Activated CD4-positive, alpha-beta memory T cell treated with anti-CD3 and anti-CD28 coated beads for 36 hours (primary cell): ENCODE measurements at regions of chr1 and their contacts with region 1.

Region 1: GRCh38 chr1:84959294-84959693 is 37.6 kb downstream of the MCOLN2 start:
- DNase-seq: peak; percentile 81
- H3K4me3 Mint-ChIP-seq: no peak overlapping the region
- H3K27ac Mint-ChIP-seq: peak overlapping the region; percentile 72
- H3K4me1 Mint-ChIP-seq: peaks cover 32% of the 10 kb centered on the region
- H3K27me3 Mint-ChIP-seq: no peaks in the 10 kb centered on the region

Region 2: DNA sequence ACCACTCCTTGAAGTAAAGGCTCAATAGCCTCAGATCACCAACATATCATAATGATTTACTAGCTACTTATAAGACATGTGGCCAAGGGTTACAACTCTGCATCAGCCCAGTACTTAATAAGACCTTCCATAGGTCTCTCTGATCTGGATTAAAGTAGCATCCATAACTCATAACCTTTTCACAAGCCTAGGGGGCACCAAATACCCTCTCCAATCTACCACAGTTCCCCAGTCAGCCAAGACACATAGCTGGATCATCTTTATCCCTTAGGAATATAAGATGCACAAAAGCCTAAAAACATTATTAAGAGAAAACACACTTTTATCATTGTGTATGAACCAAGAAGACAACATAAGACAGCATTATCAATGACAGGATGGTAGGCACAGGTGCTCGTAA is 291.1 kb before region 1 on chr1:
- CTCF ChIA-PET with region 1: no interaction called
- POLR2A ChIA-PET with region 1: no interaction called
- intact Hi-C with region 1: no loop called
- DNase-seq: no peak
- H3K4me3 Mint-ChIP-seq: no peak overlapping the region
- H3K27ac Mint-ChIP-seq: no peak overlapping the region
- H3K4me1 Mint-ChIP-seq: peaks cover 2% of the 10 kb centered on the region
- H3K27me3 Mint-ChIP-seq: no peaks in the 10 kb centered on the region

Region 3: DNA sequence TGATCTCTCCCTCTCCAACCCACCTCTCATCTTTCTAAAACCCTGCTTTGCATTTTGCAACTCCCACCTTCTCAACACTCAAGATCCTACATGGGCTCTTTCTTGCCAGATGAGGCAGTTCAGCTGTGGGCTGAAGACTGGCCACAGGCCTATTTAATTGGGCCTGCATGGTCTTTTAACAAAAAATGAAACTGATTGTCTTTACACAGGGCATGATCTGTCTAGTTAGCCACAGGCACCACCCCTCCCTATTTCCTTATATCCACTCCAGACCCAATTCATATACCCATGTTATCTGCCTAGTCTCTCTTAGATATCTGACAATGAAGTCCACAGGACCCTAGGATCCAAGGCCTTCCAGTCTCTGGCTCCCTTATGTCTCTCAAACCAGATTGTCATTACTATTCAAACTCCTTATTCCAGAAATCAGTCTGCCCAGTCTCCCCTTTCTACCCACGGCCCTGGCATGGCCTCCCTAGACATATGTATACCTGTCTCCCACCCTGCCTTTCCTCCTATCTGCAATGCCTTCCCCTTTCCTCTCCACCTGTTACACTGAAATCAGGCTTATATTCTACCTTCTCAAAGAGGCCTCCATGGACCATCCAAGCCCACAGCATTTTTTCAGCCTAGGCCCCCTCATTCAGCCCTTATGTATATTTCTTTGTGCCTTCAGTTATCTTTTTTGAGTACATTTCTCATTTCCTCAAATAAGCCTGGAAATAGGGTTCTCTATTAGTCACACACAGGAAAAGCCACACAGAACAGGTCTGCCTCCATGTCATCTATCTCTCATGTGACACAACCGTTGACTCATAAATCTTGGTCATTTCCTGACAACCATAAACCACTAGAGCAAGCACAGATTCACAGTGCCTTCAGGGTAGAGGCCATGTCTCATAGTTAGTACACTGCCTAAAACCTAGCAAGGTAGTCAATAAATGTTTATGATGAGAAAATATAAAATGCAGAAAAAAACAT is 105.3 kb before region 1 on chr1:
- CTCF ChIA-PET with region 1: no interaction called
- POLR2A ChIA-PET with region 1: no interaction called
- intact Hi-C with region 1: no loop called
- DNase-seq: peak; percentile 54
- H3K4me3 Mint-ChIP-seq: peak overlapping the region; percentile 4
- H3K27ac Mint-ChIP-seq: peak overlapping the region; percentile 32
- H3K4me1 Mint-ChIP-seq: peaks cover 29% of the 10 kb centered on the region
- H3K27me3 Mint-ChIP-seq: no peaks in the 10 kb centered on the region

Region 4: DNA sequence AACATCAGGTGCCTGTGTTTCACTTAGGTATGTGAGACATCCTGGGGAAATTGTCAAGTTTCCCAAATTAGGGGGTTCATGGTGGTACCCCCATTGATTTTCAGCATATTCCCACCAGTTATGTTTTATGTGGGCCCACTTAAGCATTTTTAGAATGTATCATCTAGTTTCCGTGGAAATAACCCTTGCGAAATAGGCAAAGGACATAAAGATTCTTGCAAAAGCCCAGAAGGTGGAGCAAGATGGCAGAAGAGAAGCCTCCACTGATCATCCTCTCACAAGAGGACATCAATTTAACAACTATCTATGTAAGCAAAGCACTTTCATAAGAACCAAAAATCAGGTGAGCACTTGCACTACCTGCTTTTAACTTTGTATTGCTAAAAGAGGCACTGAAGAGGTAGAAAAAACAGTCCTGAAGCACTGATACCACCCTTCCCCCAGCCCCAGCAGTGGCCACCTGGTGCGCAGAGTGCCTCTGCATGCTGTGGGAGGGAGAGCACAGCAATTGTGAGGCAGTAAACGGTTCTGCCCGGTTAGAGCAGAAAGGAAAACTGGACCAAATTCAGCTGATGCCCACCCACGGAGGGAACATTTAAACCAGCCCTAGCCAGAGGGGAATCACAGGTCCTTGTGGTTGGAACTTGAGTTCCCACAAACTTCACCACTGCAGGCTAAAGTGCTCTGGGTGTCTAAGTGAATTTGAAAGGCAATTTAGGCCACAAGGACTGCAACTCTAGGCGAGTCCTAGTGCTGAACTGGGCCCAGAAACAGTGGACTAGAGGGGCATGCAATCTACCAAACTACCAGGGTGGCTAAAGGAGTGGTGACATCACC is 14.4 kb after region 1 on chr1:
- CTCF ChIA-PET with region 1: interaction called, 34 read pairs
- POLR2A ChIA-PET with region 1: interaction called, 36 read pairs
- intact Hi-C with region 1: loop called (anchors 1 kb)
- DNase-seq: peak; percentile 37
- H3K4me3 Mint-ChIP-seq: no peak overlapping the region
- H3K27ac Mint-ChIP-seq: peak overlapping the region; percentile 55
- H3K4me1 Mint-ChIP-seq: peaks cover 76% of the 10 kb centered on the region
- H3K27me3 Mint-ChIP-seq: no peaks in the 10 kb centered on the region

Region 5: GRCh38 chr1:84988588-84988987 is 29.3 kb after region 1 on chr1:
- CTCF ChIA-PET with region 1: interaction called, 24 read pairs
- POLR2A ChIA-PET with region 1: interaction called, 41 read pairs
- intact Hi-C with region 1: loop called (anchors 1 kb)
- DNase-seq: peak; percentile 59
- H3K4me3 Mint-ChIP-seq: peak overlapping the region; percentile 28
- H3K27ac Mint-ChIP-seq: peak overlapping the region; percentile 40
- H3K4me1 Mint-ChIP-seq: peaks cover 52% of the 10 kb centered on the region
- H3K27me3 Mint-ChIP-seq: no peaks in the 10 kb centered on the region

Region 6: DNA sequence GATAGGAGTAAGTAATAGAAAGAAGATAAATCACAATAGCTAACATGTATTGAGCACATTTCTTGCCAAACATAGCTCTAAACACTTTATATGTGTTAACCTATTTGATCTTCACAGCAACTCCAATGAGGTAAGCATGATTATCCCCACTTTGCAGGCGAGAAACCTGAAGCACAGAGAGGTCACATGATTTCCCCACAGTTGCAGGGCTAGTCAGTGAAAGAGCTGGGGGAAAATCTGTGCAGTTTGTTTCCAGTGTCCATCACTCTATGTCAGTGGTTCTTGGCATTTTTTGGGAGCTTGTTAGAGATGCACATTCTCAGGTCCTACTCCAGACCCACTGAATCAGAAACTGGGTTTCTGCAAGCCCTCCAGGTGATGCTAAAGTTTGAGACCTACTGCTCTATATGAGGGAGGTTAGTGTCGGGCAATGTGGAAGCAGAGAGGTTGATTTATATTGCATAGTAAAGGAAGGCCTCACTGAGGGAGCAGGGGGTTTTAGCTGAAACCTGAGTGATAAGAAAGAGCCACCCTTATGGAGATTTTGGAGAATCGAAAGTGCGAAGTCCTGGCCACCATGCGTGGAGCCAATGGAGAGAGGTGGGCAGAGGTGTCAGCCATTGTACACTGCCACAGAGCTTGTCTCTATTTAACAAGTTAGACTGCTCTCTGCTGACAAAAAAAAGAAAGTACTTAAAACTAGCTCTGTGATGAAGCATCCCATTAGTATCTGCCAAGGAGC is 68.1 kb after region 1 on chr1:
- CTCF ChIA-PET with region 1: interaction called, 13 read pairs
- POLR2A ChIA-PET with region 1: no interaction called
- intact Hi-C with region 1: no loop called
- DNase-seq: peak; percentile 25
- H3K4me3 Mint-ChIP-seq: no peak overlapping the region
- H3K27ac Mint-ChIP-seq: no peak overlapping the region
- H3K4me1 Mint-ChIP-seq: peaks cover 12% of the 10 kb centered on the region
- H3K27me3 Mint-ChIP-seq: no peaks in the 10 kb centered on the region

Region 7: DNA sequence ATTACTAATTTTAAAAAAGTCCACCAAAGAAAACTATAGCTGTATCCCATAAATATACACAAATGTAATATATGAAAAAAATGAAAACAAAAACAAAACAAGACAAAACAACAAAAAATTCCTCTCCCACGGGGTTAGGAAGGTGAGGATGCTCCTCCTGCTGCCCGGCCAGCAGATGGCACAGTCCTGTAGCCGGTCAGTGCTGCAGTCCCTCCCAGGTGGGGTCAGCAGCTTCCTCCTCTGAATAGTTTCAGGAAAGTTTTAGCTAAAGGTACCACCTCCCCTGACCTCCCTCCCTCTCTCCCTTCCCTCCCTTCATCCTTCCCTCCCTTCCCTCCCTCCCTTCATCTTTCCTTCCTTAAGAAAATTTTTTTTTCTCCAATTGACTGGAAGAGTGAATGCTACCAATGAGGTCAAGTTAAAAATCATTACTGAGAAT is 385.0 kb after region 1 on chr1:
- CTCF ChIA-PET with region 1: no interaction called
- POLR2A ChIA-PET with region 1: no interaction called
- intact Hi-C with region 1: no loop called
- DNase-seq: no peak
- H3K4me3 Mint-ChIP-seq: no peak overlapping the region
- H3K27ac Mint-ChIP-seq: no peak overlapping the region
- H3K4me1 Mint-ChIP-seq: no peaks in the 10 kb centered on the region
- H3K27me3 Mint-ChIP-seq: peaks cover 12% of the 10 kb centered on the region

Region 8: DNA sequence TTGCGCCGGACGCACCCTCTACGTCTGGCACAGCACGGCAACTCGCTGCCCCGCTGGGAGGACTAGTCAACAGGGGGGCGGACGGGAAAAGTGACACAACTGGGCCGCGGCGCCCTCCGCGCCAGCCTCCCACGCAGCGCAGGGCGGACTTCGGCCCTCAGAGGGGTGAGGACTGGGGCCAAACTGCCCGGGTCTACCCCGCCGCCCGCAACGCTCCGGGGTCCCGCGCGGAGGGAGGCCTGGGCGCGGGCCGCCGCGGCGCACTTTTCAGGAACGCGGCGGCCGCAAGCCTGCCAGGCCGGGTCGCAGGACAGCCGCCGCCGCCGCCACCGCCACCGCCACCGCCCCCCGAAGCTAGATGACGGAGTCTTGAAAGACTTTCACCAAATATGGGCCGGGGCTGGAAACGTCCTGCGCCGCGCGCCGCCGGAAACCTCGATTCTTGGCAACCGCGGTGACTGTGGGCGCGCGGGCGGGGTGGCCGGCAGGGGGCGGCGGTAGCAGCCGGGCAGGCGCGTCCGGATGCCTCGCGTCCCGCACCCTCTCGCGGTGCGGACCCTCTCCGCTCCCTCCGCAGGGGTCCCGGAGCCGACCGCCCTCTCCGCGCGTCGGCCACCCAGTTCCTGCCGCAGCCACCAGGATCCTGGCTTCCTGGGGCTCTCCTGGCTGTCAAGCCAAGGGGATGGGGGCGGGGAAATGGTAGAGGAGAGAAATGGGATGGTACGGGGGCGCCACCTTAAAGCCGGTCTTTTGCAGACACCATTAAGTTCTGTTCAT is 617.5 kb after region 1 on chr1:
- CTCF ChIA-PET with region 1: no interaction called
- POLR2A ChIA-PET with region 1: no interaction called
- intact Hi-C with region 1: loop called (anchors 10 kb)
- DNase-seq: peak; percentile 72
- H3K4me3 Mint-ChIP-seq: peak overlapping the region; percentile 60
- H3K27ac Mint-ChIP-seq: no peak overlapping the region
- H3K4me1 Mint-ChIP-seq: peaks cover 33% of the 10 kb centered on the region
- H3K27me3 Mint-ChIP-seq: peaks cover 66% of the 10 kb centered on the region

Region 9: GRCh38 chr1:85707990-85708828 is 748.9 kb after region 1 on chr1 and contains the start of gene ZNHIT6:
- CTCF ChIA-PET with region 1: no interaction called
- POLR2A ChIA-PET with region 1: no interaction called
- intact Hi-C with region 1: loop called (anchors 5 kb)
- DNase-seq: peak; percentile 93
- H3K4me3 Mint-ChIP-seq: no peak within 1 kb of the TSS
- H3K27ac Mint-ChIP-seq: no peak within 1 kb of the TSS
- H3K4me1 Mint-ChIP-seq: peaks cover 23% of the 10 kb centered on the region
- H3K27me3 Mint-ChIP-seq: no peaks in the 10 kb centered on the region
- total RNA-seq, gene ZNHIT6: 18.7 TPM